Right cardiac atrium (tissue), 5 donors: ENCODE measurements at regions of chr11 and their contacts with region 1.

Region 1: DNA sequence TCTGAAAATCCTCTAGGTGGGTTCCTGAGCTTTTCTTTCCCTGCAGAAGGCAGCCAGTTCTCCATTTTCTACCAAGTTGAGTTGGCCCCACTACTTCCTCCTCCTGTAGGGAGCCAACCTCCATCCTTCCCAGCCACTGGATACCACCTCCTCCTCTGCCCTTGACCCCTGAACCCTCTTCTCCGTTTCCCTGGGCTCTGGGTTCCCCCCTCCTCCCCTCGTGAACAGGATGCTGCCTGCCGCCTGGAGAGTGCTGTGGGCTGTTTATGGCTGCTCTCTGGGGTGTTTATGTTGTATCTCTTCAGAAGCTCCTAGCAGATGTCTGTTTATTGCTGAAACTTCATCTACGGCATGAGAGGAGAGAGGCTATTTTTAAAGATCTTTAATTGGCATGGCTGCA is 8.6 kb downstream of the MICAL2 start:
- DNase-seq: no peak
- ATAC-seq: no peak
- H3K4me3 ChIP-seq: no peak overlapping the region
- H3K27ac ChIP-seq: peak overlapping the region; percentile 57
- H3K4me1 ChIP-seq: peaks cover 36% of the 10 kb centered on the region
- H3K27me3 ChIP-seq: no peaks in the 10 kb centered on the region

Region 2: DNA sequence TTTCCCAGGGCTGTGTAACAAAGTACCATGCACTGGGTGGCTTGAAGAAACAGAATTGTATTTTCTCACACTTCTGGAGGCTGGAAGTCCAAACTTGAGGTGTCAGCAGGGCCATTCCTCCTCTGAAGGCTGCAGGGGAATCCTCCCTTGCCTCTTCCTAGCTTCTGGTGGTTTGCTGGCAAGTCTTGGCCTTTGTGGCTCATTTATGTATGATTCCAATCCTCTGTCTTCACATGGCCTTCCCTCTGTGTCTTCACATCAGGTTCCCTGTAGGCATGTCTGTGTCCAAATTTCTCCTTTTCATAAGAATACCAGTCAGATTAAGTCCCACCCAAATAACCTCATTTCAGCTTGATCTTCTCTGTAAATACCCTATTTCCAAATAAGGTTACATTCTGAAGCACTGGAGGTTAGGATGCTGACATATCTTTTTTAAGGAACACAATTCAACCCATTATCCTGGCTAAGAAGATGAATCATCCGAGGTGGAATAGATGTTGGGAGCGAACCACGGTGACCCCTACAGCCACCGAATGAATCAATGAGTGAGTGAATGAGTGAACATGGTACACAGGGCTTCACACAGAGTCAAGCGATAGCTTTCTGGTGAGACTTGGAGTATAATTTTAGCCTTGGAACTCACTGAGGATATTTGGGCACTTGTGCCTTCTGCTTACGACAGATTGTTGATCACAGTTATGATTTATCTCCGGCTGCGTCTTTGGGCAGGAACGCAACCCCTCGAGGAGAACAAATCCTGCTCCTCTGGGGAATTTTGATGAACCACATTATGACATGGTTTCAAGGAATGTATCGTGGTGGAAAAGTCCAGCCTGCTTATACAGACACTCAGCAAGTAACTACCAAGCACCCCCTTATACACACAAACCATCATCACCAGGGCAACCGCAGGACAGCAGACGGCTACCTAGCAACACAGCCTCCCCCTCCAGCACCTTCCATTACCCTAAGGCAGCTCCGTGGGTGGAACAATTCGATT is 42.8 kb before region 1 on chr11:
- intact Hi-C with region 1: no loop called
- DNase-seq: no peak
- ATAC-seq: peak; percentile 31 to 41
- H3K4me3 ChIP-seq: no peak overlapping the region
- H3K27ac ChIP-seq: no peak overlapping the region
- H3K4me1 ChIP-seq: no peaks in the 10 kb centered on the region
- H3K27me3 ChIP-seq: no peaks in the 10 kb centered on the region

Region 3: GRCh38 chr11:12149672-12150225 is 30.8 kb after region 1 on chr11:
- intact Hi-C with region 1: loop called in 1 of 4 experiments (anchors 5 kb)
- DNase-seq: no peak
- ATAC-seq: peak; percentile 17 to 18
- H3K4me3 ChIP-seq: no peak overlapping the region
- H3K27ac ChIP-seq: no peak overlapping the region
- H3K4me1 ChIP-seq: peaks cover 19% of the 10 kb centered on the region
- H3K27me3 ChIP-seq: no peaks in the 10 kb centered on the region